Activated naive CD8-positive, alpha-beta T cell treated with anti-CD3 and anti-CD28 coated beads, Interleukin-2, amount 10 ng/mL, durations not matched to agents 7 days and 5 days (primary cell): ENCODE measurements at regions of chr11 and their contacts with region 1.

Region 1: GRCh38 chr11:76235233-76236091 is 29.2 kb upstream of the WNT11 start:
- DNase-seq: peak; percentile 92
- ATAC-seq: peak; percentile 86
- H3K4me3 Mint-ChIP-seq: peak overlapping the region; percentile 90
- H3K27ac Mint-ChIP-seq: peak overlapping the region; percentile 97
- H3K4me1 Mint-ChIP-seq: peaks cover 48% of the 10 kb centered on the region
- H3K27me3 Mint-ChIP-seq: no peaks in the 10 kb centered on the region

Region 2: GRCh38 chr11:75946531-75947530 is 288.6 kb before region 1 on chr11:
- POLR2A ChIA-PET with region 1: no interaction called
- DNase-seq: no peak
- ATAC-seq: no peak
- H3K4me3 Mint-ChIP-seq: no peak overlapping the region
- H3K27ac Mint-ChIP-seq: no peak overlapping the region
- H3K4me1 Mint-ChIP-seq: peaks cover 7% of the 10 kb centered on the region
- H3K27me3 Mint-ChIP-seq: no peaks in the 10 kb centered on the region

Region 3: DNA sequence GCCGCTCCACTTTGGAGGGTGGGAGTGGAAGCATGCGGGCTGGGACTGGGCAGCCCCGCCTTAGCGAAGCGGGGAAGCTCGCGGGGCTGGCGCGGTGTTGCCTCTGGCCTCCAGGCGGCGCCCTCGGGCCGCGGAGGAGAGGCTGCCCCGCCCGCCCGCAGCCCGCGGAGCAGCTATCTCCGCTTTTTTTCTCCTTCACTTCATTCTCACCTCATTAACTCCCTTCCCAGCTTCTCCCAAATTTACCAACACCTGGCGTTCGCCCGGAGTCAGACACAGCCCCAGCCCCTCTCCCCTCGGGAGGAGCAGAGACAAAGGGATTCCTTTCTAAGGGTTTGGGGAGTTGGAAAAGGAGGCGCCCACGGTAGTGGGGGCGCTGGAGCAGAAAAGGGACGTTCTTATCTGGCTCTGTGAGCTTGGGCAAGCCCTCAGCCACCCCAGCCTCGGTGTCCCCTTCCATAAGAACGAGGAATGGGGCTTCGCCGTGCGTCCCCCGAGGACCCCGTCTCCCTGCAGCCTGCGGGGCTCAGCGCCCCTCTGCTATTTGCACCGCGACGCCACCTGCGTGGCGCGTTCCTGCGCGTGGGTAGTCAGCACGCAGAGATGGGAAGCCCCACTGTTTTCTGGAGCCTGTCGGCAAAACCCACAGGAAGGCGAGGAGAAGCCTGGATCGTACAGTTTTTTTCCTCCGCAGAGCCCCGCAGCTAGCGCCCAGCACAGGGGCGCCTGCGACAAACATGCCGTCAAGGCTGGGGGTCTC is 27.6 kb before region 1 on chr11:
- POLR2A ChIA-PET with region 1: interaction called, 47 read pairs
- DNase-seq: peak; percentile 91
- ATAC-seq: peak; percentile 60
- H3K4me3 Mint-ChIP-seq: peak overlapping the region; percentile 84
- H3K27ac Mint-ChIP-seq: no peak overlapping the region
- H3K4me1 Mint-ChIP-seq: peaks cover 14% of the 10 kb centered on the region
- H3K27me3 Mint-ChIP-seq: peaks cover 55% of the 10 kb centered on the region

Region 4: GRCh38 chr11:76288166-76288980 is 52.9 kb after region 1 on chr11:
- POLR2A ChIA-PET with region 1: interaction called, 18 read pairs
- DNase-seq: peak; percentile 61
- ATAC-seq: peak; percentile 80
- H3K4me3 Mint-ChIP-seq: peak overlapping the region; percentile 69
- H3K27ac Mint-ChIP-seq: peak overlapping the region; percentile 95
- H3K4me1 Mint-ChIP-seq: peaks cover 40% of the 10 kb centered on the region
- H3K27me3 Mint-ChIP-seq: no peaks in the 10 kb centered on the region